Cardiac septum (tissue), 1 donor: ENCODE measurements at regions of chr5 and their contacts with region 1.

Region 1: DNA sequence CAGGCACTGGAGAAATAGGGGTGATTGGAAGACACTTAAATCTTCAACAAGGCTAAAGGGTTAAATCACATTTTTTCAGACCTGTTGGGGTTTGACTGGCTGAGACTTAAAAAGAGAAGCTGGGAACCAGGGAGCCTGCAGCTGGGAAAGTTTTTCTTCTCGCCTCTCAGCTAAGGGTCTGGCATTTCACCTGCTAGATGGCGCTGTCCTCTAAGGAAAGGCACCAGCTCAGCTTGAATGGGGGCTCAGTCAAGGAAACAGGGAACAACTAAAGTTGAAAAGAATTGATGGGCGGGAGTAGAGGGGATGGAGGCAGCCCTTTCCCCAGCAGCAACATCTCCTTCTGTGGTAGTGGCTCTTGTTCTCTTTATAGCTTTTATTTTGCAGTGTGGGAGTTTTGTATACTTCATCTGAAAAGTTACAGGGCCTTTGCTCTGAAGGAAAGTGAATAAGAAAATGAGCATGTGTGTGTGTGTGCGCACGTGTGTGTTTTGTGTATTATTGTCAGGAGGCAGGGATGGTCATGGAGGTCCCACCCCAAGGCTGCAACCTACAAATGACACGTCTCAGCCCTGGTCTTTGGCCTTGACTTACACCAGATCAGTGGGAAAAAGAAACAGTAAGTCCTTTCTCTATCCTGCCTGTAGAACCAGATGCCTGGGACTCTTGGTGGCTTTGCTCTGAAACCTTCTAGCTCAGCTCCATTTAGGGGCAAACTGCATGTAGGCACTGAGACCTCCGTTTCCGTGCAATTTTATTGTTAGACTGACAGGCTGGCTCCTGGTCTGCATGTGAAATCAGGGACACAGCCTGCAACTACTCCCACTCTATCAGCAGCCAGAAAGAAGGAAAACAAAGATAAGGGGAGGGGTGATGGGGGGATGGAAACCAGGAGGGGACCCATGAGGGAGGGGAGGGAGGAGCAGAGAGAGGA is 316.2 kb upstream of the CLINT1 start:
- DNase-seq: peak; percentile 80

Region 2: DNA sequence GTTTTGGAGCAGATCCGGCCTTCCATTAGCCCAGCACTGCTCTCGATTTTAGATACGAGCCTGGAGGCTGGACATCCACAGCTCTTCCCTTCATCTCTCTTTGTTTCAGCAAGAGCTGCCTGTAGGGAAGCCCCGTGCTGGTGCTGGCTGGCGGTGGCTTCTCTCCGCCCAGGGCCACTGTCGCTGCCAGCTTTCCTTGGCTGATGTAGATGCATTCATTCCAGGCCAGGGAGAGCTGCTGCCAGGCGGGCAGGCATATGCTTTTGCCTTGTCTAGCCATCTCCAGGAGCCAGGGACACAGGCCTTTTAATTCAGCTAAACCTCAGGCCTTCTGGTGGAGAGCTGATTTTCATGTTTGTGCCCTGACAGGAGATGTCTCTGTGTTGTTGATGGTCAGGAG is 93.1 kb after region 1 on chr5:
- intact Hi-C with region 1: no loop called
- DNase-seq: no peak

Region 3: GRCh38 chr5:158423623-158424200 is 248.5 kb after region 1 on chr5:
- intact Hi-C with region 1: loop called (anchors 5 kb)
- DNase-seq: no peak

Region 4: DNA sequence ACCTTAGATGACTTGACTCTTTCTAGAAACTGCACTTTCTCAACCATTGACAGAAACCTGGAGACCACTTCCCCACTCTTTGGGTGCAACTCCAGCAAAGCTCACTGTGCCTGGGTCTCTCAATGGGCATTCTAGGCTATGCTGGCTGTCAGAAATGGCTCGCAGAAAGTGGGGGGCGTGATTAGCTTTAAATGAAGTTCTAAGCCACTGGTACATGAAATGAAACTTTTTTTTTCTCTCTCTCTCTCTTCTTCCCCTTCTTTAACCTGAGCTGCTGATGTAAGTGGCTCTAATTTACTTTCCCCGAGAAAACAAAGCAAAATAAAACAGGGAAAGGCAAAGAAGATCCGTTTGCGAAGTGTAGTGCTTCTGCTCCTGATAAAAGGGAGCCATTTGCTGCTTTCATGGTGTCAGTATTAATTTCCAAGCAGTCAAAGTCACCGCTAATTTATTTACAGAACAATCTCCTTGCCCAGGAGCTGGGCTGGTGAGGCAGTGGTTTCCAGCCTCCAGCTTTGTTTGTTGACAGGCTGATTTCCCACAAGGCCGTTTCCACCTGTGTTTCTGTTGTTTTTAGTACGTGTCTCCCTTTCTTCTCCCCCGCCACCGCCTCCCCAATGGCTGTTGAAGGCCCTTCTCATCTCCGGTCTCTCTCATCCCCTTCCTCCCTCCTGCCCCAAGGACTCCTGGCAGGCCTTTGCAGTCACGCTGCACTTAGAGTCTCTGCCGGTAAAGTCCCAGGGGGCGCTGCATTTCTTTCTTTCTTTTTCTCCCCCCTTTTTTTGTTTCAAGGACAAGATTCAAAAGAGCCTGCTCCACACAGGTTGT is 501.7 kb after region 1 on chr5:
- intact Hi-C with region 1: loop called (anchors 5 kb)
- DNase-seq: no peak

Region 5: DNA sequence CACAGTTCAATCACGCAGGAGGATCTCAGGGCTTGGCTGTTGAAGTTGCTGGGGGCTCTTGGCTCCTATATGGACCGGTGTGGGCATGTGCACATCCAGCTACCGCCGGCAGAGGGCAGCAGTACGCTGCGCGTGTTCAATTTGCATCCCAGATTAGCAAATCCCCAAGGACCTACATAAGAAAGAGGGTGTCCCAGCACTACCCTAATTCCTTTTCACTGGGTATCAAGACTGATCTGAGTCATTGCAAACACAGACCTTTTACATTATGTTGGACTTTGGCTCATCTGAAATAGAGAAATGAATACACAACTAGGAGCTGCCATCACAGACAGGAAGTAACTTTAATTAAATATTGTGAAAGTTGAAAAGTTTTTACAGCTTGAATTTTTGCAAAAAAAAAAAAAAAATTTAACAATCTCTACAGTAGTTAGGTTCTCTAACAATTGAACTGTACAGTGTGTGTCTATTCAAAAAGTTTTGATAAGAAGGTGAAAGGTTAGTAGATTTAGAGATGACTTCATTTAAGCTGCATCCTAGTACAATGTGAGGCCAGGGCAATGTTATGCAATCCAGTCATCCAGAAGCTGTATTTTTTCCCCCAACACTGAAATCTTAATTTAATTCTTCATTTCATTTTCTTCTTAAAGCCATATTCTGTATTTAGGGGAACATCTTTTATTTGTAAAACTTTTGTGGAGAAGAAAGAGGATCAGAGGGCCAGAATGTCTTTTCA is 520.6 kb after region 1 on chr5:
- intact Hi-C with region 1: loop called (anchors 5 kb)
- DNase-seq: peak; percentile 89

Region 6: GRCh38 chr5:159133041-159133741 is 958.0 kb after region 1 on chr5:
- intact Hi-C with region 1: loop called (anchors 10 kb)
- DNase-seq: no peak